Head of caudate nucleus (tissue), 42 donors: ENCODE measurements at regions of chr10 and their contacts with region 1.

Region 1: GRCh38 chr10:118720685-118721538 is 33.9 kb downstream of the CACUL1 start:
- DNase-seq: peak in 32 of 42 donors; percentile 19 to 90 (median 62)

Region 2: DNA sequence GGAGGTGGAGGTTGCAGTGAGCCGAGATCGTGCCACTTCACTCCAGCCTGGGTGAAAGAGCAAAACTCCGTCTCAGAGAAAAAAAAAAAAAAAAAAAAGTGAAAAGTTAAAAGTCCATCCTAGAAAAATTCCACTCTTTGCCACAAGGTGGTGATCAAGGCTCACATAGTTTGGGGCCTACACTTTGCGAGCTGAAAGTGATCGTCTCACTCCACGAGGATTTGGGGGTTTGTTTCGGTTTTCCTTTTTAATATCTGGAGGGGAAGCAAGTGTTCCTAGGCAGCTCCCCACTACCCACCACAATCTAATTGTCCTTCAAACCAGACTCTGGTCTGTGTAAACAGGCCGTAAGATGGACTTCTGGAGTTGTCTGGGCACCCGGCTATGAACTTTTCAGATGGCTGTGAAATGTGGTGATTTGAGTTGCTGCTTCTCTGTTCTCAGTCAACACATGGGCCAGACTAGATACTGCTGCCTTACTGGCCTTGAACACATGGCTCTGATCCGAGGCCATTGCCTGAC is 152.5 kb before region 1 on chr10:
- intact Hi-C with region 1: loop called (anchors 2 kb)
- DNase-seq: peak in 23 of 42 donors; percentile 21 to 84 (median 50)

Region 3: GRCh38 chr10:118792526-118792925 is 71.6 kb after region 1 on chr10:
- intact Hi-C with region 1: no loop called
- DNase-seq: peak in 14 of 42 donors; percentile 12 to 54 (median 41)